ENCODE measurements at regions of chr5 and their contacts with region 1.

Region 1: GRCh38 chr5:6745706-6746222 is 32.5 kb downstream of the TENT4A start:
- DNase-seq: peak in 1 of 2 experiments; percentile 35
- H3K4me3 ChIP-seq: no peak overlapping the region
- H3K4me3 Mint-ChIP-seq: no peak overlapping the region
- H3K27ac Mint-ChIP-seq: no peak overlapping the region
- H3K4me1 ChIP-seq: no peaks in the 10 kb centered on the region
- H3K4me1 Mint-ChIP-seq: no peaks in the 10 kb centered on the region
- H3K27me3 ChIP-seq: no peaks in the 10 kb centered on the region
- H3K27me3 Mint-ChIP-seq: no peaks in the 10 kb centered on the region
- CTCF ChIP-seq: peak; percentile 43 to 81

Region 2: DNA sequence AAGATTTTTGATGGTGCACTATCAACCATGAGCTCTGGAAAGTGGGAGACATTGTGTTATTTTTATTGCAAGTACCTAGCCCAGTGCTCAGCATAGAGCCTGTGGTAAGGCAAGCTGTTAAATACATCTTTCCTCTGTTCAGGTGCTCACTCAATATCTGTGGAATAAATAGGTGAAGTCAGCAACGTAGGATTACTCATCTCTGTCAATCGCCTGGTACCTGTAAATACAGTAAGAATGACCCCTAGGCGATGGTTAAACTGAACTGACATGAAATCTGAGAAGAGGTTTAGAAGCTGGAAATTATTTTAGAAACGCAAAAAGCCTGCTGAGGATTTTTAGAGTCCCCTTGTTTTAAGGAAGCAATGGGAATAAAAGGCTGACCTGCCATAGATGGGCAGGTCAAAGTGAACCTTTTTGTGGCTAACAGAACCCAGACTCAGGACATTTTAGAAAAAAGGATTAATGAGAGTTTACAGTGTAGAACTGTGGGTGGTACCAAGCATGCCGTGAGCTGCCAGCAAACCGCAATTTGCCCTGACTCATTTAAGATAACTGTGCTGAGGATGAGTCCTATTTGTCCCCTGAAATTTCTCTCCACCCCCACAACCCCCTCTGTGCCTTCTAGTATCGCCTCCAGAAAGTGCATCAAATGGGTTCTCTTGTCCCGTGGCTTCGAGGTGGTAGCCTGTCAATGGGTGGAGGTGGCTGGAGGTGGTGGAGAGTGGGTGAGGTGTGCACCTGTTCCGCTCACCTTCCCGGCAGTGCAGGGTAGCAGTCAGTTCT is 742.5 kb before region 1 on chr5:
- CTCF ChIA-PET with region 1: no interaction called
- POLR2A ChIA-PET with region 1: no interaction called
- intact Hi-C with region 1: no loop called
- DNase-seq: no peak
- H3K4me3 ChIP-seq: no peak overlapping the region
- H3K4me3 Mint-ChIP-seq: no peak overlapping the region
- H3K27ac Mint-ChIP-seq: no peak overlapping the region
- H3K4me1 ChIP-seq: no peaks in the 10 kb centered on the region
- H3K4me1 Mint-ChIP-seq: no peaks in the 10 kb centered on the region
- H3K27me3 ChIP-seq: no peaks in the 10 kb centered on the region
- H3K27me3 Mint-ChIP-seq: peaks cover 16% of the 10 kb centered on the region
- CTCF ChIP-seq: no peak

Region 3: GRCh38 chr5:6291961-6292360 is 453.8 kb before region 1 on chr5:
- CTCF ChIA-PET with region 1: no interaction called
- POLR2A ChIA-PET with region 1: no interaction called
- intact Hi-C with region 1: loop called (anchors 2 kb)
- DNase-seq: peak in 1 of 2 experiments; percentile 41
- H3K4me3 ChIP-seq: no peak overlapping the region
- H3K4me3 Mint-ChIP-seq: no peak overlapping the region
- H3K27ac Mint-ChIP-seq: no peak overlapping the region
- H3K4me1 ChIP-seq: no peaks in the 10 kb centered on the region
- H3K4me1 Mint-ChIP-seq: no peaks in the 10 kb centered on the region
- H3K27me3 ChIP-seq: no peaks in the 10 kb centered on the region
- H3K27me3 Mint-ChIP-seq: peaks cover 6% of the 10 kb centered on the region
- CTCF ChIP-seq: peak in 1 of 2 experiments; percentile 40

Region 4: DNA sequence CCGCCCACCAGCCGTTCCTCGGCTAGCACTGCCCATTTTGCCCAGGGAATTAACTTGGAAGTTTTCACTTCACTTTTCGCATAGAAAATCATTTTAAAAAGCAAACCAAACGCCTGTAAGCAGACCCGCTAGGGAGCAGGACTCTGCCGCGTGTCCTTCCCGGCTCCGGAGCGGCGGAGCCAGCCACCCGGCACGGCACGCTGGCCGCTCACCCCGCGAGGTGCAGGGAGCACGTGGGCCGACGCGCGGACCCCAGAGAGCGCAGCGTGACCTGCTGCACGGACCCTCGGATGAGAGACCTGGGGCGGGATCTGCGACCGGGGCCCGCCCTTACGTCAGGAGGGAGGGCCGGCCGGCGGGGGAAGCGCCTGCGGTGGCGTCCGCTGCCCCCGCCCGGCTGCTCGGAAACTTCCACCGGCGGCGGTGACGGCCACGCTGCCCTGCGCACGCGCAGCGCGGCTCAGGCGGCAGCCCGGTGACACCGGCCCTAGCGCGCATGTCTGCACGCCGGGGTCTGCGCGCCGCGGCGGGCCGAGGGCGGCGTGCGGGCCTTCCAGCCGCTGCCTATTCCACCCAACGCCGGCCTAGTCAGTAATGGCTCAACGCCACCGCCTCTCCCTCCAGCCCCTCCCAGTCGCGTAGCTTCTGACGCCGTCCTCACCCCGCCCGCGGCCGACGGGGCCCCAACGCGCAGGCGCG is 33.0 kb before region 1 on chr5:
- CTCF ChIA-PET with region 1: no interaction called
- POLR2A ChIA-PET with region 1: no interaction called
- intact Hi-C with region 1: loop called (anchors 2 kb)
- DNase-seq: peak; percentile 96 to 98
- H3K4me3 ChIP-seq: peak overlapping the region; percentile 92
- H3K4me3 Mint-ChIP-seq: peak overlapping the region; percentile 80
- H3K27ac Mint-ChIP-seq: peak overlapping the region; percentile 86
- H3K4me1 ChIP-seq: peaks cover 16% of the 10 kb centered on the region
- H3K4me1 Mint-ChIP-seq: peaks cover 20% of the 10 kb centered on the region
- H3K27me3 ChIP-seq: no peaks in the 10 kb centered on the region
- H3K27me3 Mint-ChIP-seq: no peaks in the 10 kb centered on the region
- CTCF ChIP-seq: no peak

Region 5: DNA sequence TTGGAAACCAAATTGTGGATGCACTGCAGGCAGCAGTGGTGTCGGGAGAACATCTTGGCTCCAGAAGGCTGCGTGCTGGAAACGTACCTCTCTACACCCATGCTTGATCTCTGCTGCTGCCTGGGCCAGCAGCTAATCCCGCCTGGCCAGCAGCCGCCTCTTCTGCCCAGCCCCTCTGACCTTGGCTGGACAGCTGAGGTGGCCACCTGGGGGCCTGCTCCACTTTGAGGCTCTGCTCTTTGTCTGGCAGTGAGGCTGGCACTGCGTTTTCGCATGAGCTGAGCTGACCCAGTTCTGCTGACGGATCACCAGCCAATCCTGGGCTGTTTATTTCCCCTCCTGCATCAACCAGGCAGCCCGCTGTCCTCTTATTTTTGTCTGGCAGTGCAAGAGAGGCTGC is 122.4 kb after region 1 on chr5:
- CTCF ChIA-PET with region 1: no interaction called
- POLR2A ChIA-PET with region 1: no interaction called
- intact Hi-C with region 1: no loop called
- DNase-seq: no peak
- H3K4me3 ChIP-seq: no peak overlapping the region
- H3K4me3 Mint-ChIP-seq: no peak overlapping the region
- H3K27ac Mint-ChIP-seq: no peak overlapping the region
- H3K4me1 ChIP-seq: no peaks in the 10 kb centered on the region
- H3K4me1 Mint-ChIP-seq: no peaks in the 10 kb centered on the region
- H3K27me3 ChIP-seq: no peaks in the 10 kb centered on the region; the same call in 1 of the 2 replicates
- H3K27me3 Mint-ChIP-seq: peaks cover 6% of the 10 kb centered on the region
- CTCF ChIP-seq: no peak

Measured in Caco-2 (cell line).